ENCODE measurements at regions of chr12 and their contacts with region 1.

Region 1: DNA sequence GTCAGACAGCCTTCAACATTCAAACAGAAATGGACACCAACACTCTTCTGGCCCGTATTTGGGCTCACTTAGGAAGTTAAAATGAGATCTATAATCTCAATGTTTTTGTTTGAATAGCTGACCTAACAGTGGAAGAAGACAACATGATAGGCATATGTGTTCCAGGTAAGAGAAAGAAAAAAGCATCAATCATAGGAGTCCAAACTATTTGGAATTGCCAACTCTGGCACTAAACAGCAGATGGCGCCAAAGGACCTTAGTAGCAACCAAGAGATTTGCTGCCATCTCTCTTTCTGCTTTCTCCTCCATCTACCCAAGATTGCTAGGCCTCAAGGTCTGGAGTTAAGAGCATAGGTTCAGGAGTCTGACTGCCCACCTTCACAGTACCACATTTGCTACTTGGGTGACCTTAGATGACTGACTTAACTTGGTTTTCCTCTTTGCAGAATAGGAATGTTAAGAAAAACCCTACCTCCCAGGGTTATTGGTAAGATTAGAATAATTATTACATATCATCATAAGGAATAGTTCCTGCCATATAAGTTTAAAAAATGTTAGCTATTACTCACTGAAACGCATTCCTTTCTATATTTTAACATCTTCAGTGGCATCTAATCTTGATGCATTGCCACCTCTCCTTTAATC is 30.2 kb downstream of the PEX5 start:
- DNase-seq: peak; percentile 56
- H3K4me3 ChIP-seq: no peak overlapping the region
- H3K27ac ChIP-seq: no peak overlapping the region
- H3K4me1 ChIP-seq: peaks cover 3% of the 10 kb centered on the region
- H3K27me3 ChIP-seq: peaks cover 9% of the 10 kb centered on the region
- CTCF ChIP-seq: peak; percentile 87 to 94

Region 2: DNA sequence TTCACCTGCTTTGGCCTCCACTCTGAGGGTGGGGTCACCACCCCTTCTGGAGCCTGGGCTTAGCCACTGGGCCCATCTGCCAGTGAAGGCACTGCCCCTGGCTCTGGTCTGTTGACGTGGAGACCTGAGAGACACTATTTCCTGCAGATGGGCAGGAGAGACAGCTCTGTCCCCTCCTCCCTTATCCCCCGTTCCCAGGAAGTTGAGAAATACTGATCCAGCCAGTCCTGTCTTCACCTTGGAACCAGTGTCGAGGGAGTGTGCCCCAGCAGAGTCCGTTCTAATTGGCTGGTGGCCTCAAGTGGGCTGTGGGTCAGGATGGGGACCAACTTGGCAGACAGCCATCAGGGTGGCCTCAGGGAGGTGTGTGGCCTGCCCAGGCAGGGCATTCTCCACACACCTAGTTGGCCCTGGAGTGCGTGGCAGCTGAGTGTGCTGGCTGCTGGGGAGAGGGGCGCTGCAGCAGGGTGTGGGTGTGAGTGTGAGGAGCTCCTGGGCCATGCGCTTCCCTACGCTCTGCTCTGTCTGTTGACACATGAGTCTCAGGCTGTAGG is 64.2 kb before region 1 on chr12:
- CTCF ChIA-PET with region 1: no interaction called
- dilution Hi-C with region 1: no loop called
- in situ Hi-C with region 1: no loop called
- intact Hi-C with region 1: no loop called
- DNase-seq: peak; percentile 43
- H3K4me3 ChIP-seq: no peak overlapping the region
- H3K27ac ChIP-seq: no peak overlapping the region
- H3K4me1 ChIP-seq: peaks cover 10% of the 10 kb centered on the region
- H3K27me3 ChIP-seq: no peaks in the 10 kb centered on the region
- CTCF ChIP-seq: no peak

Region 3: GRCh38 chr12:7171854-7172253 is 47.9 kb before region 1 on chr12:
- CTCF ChIA-PET with region 1: no interaction called
- dilution Hi-C with region 1: no loop called
- in situ Hi-C with region 1: no loop called
- intact Hi-C with region 1: no loop called
- DNase-seq: no peak
- H3K4me3 ChIP-seq: no peak overlapping the region
- H3K27ac ChIP-seq: no peak overlapping the region
- H3K4me1 ChIP-seq: peaks cover 4% of the 10 kb centered on the region
- H3K27me3 ChIP-seq: no peaks in the 10 kb centered on the region
- CTCF ChIP-seq: no peak

Region 4: GRCh38 chr12:7269273-7269672 is 49.6 kb after region 1 on chr12:
- CTCF ChIA-PET with region 1: no interaction called
- dilution Hi-C with region 1: no loop called
- in situ Hi-C with region 1: no loop called
- intact Hi-C with region 1: no loop called
- DNase-seq: peak; percentile 5
- H3K4me3 ChIP-seq: no peak overlapping the region
- H3K27ac ChIP-seq: no peak overlapping the region
- H3K4me1 ChIP-seq: no peaks in the 10 kb centered on the region
- H3K27me3 ChIP-seq: no peaks in the 10 kb centered on the region
- CTCF ChIP-seq: no peak

Region 5: GRCh38 chr12:7583571-7583970 is 363.9 kb after region 1 on chr12:
- CTCF ChIA-PET with region 1: no interaction called
- dilution Hi-C with region 1: no loop called
- in situ Hi-C with region 1: no loop called
- intact Hi-C with region 1: loop called (anchors 1 kb)
- DNase-seq: no peak
- H3K4me3 ChIP-seq: no peak overlapping the region
- H3K27ac ChIP-seq: no peak overlapping the region
- H3K4me1 ChIP-seq: no peaks in the 10 kb centered on the region
- H3K27me3 ChIP-seq: peaks cover 8% of the 10 kb centered on the region
- CTCF ChIP-seq: no peak

Measured in mammary epithelial cell (primary cell).